Heart left ventricle (tissue), 16 donors: ENCODE measurements at regions of chr7 and their contacts with region 1.

Region 1: GRCh38 chr7:22867003-22867402 is 44.4 kb upstream of the TOMM7 start:
- DNase-seq: no peak
- ATAC-seq: peak in 3 of 4 donors; percentile 72 to 86 (median 74)
- H3K4me3 ChIP-seq: no peak overlapping the region
- H3K27ac ChIP-seq: peak overlapping the region; percentile 43 to 90 (median 75)
- H3K4me1 ChIP-seq: peaks cover 0 to 31% (median 22%) of the 10 kb centered on the region in 12 donors
- H3K27me3 ChIP-seq: no peaks in the 10 kb centered on the region
- CTCF ChIP-seq: no peak
- POLR2A ChIP-seq: no peak

Region 2: DNA sequence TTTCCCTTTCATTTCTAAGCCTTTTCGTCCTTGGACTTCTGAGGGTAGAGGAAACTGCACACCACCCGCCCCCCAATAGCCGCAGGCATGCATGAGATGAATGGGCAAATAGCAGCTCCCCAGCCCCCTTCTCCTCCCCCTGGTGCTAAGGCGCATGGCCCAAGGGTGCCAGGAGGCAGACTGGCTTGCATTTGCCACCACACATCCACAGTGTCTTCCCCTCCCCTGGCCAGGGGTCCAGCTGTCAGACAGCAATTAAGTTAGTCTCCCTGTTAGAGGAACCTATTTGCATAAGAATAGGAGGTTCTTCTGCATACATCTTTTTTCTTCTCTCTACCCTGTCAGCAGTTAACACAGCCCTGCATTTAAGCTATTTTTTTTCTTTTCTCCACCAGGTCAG is 64.6 kb before region 1 on chr7:
- intact Hi-C with region 1: no loop called
- DNase-seq: no peak
- ATAC-seq: no peak
- H3K4me3 ChIP-seq: no peak overlapping the region
- H3K27ac ChIP-seq: no peak overlapping the region
- H3K4me1 ChIP-seq: no peaks in the 10 kb centered on the region
- H3K27me3 ChIP-seq: no peaks in the 10 kb centered on the region
- CTCF ChIP-seq: no peak
- POLR2A ChIP-seq: no peak

Region 3: DNA sequence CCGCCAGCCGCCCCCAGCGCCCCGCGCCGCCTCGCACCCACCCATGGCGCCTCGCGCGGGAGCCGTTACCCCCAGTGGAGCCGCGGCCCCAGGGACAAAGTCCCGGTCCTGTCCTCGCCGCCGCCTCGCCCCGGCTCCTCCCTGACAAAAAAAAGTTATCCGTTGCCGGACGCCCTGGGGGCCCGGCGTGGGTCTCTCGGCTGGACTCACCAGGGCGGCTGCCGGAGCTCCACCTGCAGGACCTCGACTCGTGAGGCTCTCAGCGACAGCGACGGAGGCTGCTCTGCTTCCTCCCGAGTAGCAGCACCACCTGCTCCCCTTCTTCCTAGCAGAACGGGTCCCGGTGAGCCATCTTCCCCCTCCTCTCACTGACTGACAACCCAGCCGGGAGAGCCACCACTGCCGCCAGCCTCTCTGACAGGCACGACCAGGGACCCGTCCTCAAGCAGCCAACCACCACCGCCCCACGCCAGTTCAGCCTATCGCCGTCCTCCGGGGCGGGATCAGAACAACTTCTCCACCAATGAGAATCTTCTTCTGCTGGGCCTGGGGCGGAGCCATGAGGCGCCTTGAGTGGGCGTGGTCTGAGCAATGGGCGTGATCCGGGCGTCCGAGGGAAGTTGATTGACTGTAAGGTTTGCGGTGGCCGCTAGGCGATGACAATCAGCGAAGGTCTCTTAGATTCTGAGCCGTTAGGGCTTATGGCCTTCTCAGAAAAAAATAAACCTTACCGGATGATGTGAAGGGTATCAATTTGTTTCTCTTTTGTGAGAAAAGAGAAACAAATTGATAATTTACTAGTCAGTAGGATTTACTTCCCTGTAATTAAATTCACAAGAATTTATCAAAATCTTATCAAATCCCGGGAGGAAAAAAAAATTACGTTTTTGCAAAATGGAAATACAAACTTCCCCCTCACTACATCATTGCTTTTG is 147.0 kb after region 1 on chr7 and contains the start of gene HYCC1:
- intact Hi-C with region 1: loop called in 1 of 10 experiments (anchors 5 kb)
- DNase-seq: peak; percentile 99
- ATAC-seq: peak; percentile 100
- H3K4me3 ChIP-seq: peak within 1 kb of the TSS; percentile 73 to 94 (median 84)
- H3K27ac ChIP-seq: peak within 1 kb of the TSS; percentile 58 to 87 (median 84)
- H3K4me1 ChIP-seq: peaks cover 2 to 77% (median 35%) of the 10 kb centered on the region in 12 donors
- H3K27me3 ChIP-seq: no peaks in the 10 kb centered on the region
- CTCF ChIP-seq: peak; percentile 46 to 77 (median 62)
- POLR2A ChIP-seq: peak; percentile 98 to 100
- total RNA-seq, gene HYCC1: 31.4 to 48.2 (median 35.6) TPM